ENCODE measurements at regions of chrX and their contacts with region 1.

Region 1: DNA sequence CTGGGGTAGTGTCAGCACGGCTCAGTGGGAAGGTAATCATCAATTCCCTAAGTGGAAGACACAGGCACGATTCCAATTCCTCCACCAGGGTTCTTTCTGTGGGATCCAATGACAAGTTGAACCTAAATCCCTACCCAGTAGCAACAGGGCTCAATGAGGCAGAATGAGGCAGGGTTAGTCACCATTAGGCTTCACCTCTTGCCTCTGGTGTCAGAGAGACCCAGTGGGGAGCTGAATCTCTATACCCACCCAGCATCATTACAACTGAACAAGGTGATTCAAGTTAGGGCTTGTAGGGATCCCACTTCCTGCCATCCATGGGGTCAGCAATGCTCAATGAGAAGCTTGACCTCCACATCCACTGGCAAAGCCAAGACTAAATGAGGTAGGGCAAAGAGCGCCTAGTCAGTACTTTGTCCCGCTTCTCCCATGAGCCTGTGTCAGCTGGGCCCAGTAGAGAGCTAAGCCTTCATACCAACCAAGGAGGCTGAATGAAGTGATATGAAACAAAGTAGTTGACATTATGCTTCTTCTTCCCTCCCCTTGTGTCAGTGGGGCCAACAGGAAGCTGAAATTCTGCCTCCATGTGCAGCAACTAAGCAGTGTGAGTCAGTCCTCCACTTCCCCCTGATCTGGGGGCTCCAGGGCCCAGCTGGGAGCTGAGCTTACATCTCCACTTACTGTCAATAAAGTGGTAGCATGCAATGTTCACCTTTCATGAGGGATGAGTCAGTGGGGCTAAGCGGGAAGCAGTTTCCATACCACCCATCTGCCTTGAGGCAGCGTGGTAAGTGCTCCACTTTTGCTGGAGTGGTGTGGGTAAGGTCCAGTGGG is 36.4 kb upstream of the RBM41 start:
- DNase-seq: peak; percentile 69
- H3K4me3 ChIP-seq: peak overlapping the region in 1 of 3 experiments; percentile 8
- H3K27ac ChIP-seq: peak overlapping the region; percentile 43
- H3K4me1 ChIP-seq: peaks cover 9% of the 10 kb centered on the region
- H3K27me3 ChIP-seq: no peaks in the 10 kb centered on the region
- CTCF ChIP-seq: no peak

Region 2: DNA sequence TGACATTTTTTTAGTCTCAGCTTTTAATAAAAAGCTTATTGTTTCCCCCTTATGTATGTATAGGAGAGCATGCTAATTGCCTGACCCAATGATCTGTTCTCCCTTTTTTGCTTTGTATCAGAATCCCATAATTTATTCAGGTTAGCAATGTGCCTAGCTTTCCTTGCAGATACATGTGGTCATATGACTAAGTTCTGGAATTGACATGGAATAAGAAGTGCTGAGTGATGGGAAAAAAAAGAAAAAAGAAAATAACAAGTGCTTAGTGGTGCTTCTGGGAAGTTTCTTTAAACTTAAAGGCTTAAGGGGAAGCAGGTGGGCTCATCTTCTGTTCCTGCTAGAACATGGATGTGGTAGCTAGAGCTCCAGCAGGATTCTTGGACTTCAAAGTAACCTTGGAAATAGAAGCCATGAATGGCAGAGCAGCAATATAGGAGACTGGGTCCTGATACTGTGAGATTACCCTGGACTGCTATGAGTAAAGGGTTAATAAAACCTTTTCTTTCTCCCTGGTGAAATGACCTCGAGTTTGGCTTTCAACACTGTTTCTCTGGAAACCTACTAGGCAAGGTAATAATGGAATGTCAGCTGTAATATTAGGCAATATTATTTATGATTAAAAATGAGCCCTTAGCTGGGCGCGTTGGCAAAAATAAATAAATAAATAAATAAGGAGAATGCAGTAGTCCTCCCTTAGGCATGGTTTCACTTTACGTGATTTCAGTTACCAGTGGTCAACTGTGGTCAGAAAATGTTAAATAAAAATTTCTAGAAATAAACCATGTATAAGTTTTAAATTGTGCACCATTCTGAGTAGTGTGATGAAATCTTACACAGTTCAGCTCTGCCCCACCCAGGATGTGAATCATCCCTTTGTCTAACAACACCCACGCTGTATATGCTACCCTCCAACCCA is 19.7 kb before region 1 on chrX:
- CTCF ChIA-PET with region 1: no interaction called
- dilution Hi-C with region 1: no loop called
- in situ Hi-C with region 1: no loop called
- intact Hi-C with region 1: loop called (anchors 1 kb)
- DNase-seq: peak; percentile 61
- H3K4me3 ChIP-seq: peak overlapping the region in 1 of 3 experiments; percentile 9
- H3K27ac ChIP-seq: peak overlapping the region; percentile 91
- H3K4me1 ChIP-seq: peaks cover 11% of the 10 kb centered on the region
- H3K27me3 ChIP-seq: no peaks in the 10 kb centered on the region
- CTCF ChIP-seq: no peak

Region 3: GRCh38 chrX:107171369-107172102 is 16.5 kb after region 1 on chrX:
- CTCF ChIA-PET with region 1: interaction called, 28 read pairs
- dilution Hi-C with region 1: no loop called
- in situ Hi-C with region 1: no loop called
- intact Hi-C with region 1: no loop called
- DNase-seq: peak; percentile 21
- H3K4me3 ChIP-seq: no peak overlapping the region
- H3K27ac ChIP-seq: no peak overlapping the region
- H3K4me1 ChIP-seq: no peaks in the 10 kb centered on the region
- H3K27me3 ChIP-seq: peaks cover 3% of the 10 kb centered on the region
- CTCF ChIP-seq: no peak

Region 4: GRCh38 chrX:107429090-107429489 is 274.1 kb after region 1 on chrX:
- CTCF ChIA-PET with region 1: no interaction called
- dilution Hi-C with region 1: no loop called
- in situ Hi-C with region 1: no loop called
- intact Hi-C with region 1: no loop called
- DNase-seq: no peak
- H3K4me3 ChIP-seq: no peak overlapping the region
- H3K27ac ChIP-seq: no peak overlapping the region
- H3K4me1 ChIP-seq: no peaks in the 10 kb centered on the region
- H3K27me3 ChIP-seq: no peaks in the 10 kb centered on the region
- CTCF ChIP-seq: peak; percentile 40 to 58

Measured in mammary epithelial cell (primary cell).